Right lobe of liver (tissue), 6 donors: ENCODE measurements at regions of chr20 and their contacts with region 1.

Region 1: DNA sequence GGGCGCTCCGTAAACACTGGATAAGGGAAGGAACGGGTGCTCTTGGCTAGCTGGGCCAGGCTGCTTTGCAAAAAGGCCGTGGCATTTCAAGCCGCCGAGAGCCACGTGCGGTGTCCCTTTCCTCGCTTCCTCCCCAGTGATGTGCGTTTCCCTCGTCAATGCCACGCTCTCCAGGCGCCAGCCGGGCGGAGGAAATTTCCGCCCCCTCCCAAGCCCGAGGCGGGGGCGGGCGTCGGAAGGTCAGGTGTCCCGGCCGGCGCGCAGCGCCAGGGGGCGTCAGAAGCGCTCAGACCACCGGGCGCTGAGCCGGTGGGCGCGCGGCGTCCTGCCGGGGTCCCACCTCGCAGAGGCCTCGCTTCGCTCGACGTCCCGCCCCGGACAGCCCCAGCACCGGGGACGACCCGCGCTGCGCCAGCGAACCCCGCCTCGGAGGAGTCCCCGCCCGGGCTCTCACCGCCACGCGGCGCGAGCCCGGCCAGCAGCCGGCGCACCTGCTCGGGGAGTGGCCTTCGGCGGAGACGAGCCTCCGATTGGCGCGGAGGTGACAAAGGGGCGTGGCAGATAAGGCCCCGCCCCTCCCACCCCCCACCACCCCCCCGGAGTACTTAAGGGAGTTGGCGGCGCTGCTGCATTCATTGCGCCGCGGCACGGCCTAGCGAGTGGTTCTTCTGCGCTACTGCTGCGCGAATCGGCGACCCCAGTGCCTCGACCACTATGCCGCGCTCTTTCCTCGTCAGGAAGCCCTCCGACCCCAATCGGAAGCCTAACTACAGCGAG is at the start of gene SNAI1:
- DNase-seq: peak; percentile 78 to 90 (median 87)
- ATAC-seq: peak; percentile 84 to 90 (median 86)
- H3K4me3 ChIP-seq: peak within 1 kb of the TSS; percentile 37 to 47 (median 46)
- H3K27ac ChIP-seq: peak within 1 kb of the TSS; percentile 47 to 73 (median 51)
- H3K4me1 ChIP-seq: peaks cover 0 to 19% (median 3%) of the 10 kb centered on the region in 4 donors
- H3K27me3 ChIP-seq: no peaks in the 10 kb centered on the region
- CTCF ChIP-seq: peak; percentile 45 to 62 (median 57)
- POLR2A ChIP-seq: peak; percentile 69
- total RNA-seq, gene SNAI1: 0.73 to 1.9 (median 1.1) TPM

Region 2: DNA sequence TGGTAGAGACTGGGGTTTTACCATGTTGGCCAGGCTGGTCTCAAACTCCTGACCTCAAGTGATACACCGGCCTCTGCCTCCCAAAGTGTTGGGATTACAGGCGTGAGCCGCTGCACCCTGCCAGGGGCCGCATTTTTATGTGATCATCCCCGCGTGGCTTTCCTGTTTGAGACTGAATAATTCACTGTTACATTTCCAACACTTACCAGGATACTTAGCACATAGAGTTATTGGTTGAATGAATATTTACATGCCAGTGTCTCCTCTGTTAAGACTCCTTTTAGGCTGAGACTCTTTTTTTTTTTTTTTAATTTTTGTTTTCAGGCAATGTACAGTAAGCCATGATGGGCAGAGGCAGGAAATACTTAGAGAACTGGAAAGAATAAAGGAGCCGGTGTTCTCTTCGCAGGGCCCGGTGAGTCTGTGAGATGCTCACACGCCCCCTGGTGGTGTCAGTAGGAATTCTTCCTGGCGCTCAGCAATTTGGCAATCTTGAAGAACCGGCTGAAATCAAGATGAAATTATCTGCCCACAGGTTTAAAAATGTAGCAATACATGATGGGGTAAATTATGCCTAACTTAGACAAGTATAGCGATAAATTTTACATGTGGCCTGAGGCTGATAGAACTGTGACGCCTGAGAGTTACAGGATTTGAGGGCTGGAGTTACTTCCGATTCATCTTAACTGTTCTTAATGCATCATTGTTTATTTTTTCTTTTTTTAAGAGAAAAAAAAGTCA is 54.0 kb before region 1 on chr20:
- intact Hi-C with region 1: no loop called
- DNase-seq: peak; percentile 74 to 78 (median 75)
- ATAC-seq: peak; percentile 87 to 95 (median 89)
- H3K4me3 ChIP-seq: no peak overlapping the region
- H3K27ac ChIP-seq: no peak overlapping the region
- H3K4me1 ChIP-seq: peaks cover 0 to 6% (median under 1%) of the 10 kb centered on the region in 4 donors
- H3K27me3 ChIP-seq: no peaks in the 10 kb centered on the region
- CTCF ChIP-seq: peak; percentile 86 to 96 (median 92)
- POLR2A ChIP-seq: no peak

Region 3: DNA sequence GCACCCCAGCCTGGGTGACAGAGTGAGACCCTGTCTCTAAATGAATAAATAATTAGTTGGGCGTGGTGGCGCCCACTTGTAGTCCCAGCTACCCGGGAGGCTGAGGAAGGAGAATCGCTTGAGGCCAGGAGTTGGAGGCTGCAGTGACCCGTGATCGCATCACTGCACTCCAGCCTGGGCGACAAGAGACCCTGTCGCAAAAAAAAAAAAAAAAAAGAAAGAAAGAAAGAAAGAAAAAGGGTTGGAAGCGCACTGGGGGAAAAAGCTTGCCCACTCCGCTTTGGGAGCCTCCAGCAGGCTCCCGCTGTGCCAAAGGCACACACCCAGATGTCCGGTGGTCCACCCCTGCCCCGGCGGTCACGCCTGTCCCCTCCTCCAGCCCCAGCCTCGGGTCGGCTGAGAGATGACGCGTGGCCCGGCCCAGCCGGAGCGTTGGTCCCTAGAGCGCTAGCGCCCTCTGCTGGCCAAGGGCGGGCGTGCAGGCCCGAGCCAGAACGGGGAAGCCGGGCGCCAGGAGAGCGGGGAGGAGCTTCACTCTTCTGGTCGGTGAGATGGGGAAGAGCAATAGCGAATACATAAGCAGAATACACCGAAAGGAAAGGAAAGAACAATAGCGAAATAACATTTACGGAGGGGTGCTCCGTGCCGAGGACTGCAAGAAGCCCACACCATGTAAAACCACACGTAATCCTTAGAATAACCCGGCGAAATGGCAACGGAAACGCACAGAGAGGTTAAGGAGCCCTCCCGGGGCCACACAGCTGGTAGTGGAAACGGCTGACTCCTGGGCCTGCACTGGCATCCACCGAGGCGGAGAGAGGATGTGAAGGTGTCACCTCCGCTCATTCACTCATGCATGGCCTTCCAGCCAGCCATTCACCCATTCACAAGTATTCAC is 88.7 kb after region 1 on chr20:
- intact Hi-C with region 1: loop called (anchors 5 kb)
- DNase-seq: peak; percentile 89 to 92 (median 91)
- ATAC-seq: peak; percentile 98 to 100 (median 99)
- H3K4me3 ChIP-seq: peak overlapping the region in 2 of 3 donors; percentile 25 to 33
- H3K27ac ChIP-seq: no peak overlapping the region
- H3K4me1 ChIP-seq: peaks cover 0 to 3% (median 0%) of the 10 kb centered on the region in 4 donors
- H3K27me3 ChIP-seq: no peaks in the 10 kb centered on the region
- CTCF ChIP-seq: peak; percentile 99 to 100 (median 100)
- POLR2A ChIP-seq: no peak

Region 4: GRCh38 chr20:50138479-50139393 is 156.2 kb after region 1 on chr20:
- intact Hi-C with region 1: no loop called
- DNase-seq: peak; percentile 55 to 74 (median 68)
- ATAC-seq: peak; percentile 59 to 72 (median 62)
- H3K4me3 ChIP-seq: no peak overlapping the region
- H3K27ac ChIP-seq: peak overlapping the region; percentile 75 to 93 (median 91)
- H3K4me1 ChIP-seq: peaks cover 0 to 60% (median 37%) of the 10 kb centered on the region in 4 donors
- H3K27me3 ChIP-seq: no peaks in the 10 kb centered on the region
- CTCF ChIP-seq: peak in 1 of 4 donors; percentile 27
- POLR2A ChIP-seq: no peak